PC-9 (cell line): ENCODE measurements at regions of chr12 and their contacts with region 1.

Region 1: DNA sequence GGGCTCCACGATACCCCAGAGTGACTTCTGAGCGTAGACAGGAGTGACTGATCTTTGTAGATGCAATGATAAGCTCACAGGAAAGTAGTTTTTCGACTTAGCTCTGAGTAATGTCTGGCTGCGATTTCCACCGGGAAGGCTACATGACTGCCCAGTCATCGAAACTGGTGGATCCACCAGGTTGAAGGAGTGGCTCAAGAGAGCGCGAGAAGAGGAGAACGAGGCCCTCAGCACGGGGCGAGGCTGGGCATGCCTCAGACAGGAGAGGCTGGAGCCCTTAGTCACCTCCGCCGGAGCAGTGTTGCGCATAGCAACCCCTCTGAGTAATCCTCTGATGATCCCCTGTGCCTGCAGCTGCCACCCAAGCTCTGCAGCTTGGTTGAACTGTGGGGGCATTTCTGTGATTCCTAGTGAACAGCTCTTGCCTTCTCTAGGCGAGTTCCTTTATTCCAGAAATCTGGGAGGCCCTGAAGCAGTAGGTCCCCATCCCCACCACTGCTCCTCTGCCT is 25.6 kb downstream of the ELK3 start:
- DNase-seq: peak; percentile 96 to 99
- H3K4me3 ChIP-seq: peak overlapping the region; percentile 56
- H3K27ac ChIP-seq: peak overlapping the region; percentile 100
- H3K4me1 ChIP-seq: peaks cover 53% of the 10 kb centered on the region
- H3K27me3 ChIP-seq: no peaks in the 10 kb centered on the region
- CTCF ChIP-seq: no peak

Region 2: GRCh38 chr12:95386056-95386455 is 833.7 kb before region 1 on chr12:
- CTCF ChIA-PET with region 1: no interaction called
- POLR2A ChIA-PET with region 1: interaction called, 30 read pairs
- intact Hi-C with region 1: no loop called
- DNase-seq: no peak
- H3K4me3 ChIP-seq: no peak overlapping the region
- H3K27ac ChIP-seq: no peak overlapping the region
- H3K4me1 ChIP-seq: peaks cover 6% of the 10 kb centered on the region; the same call in 1 of the 2 replicates
- H3K27me3 ChIP-seq: no peaks in the 10 kb centered on the region
- CTCF ChIP-seq: no peak

Region 3: DNA sequence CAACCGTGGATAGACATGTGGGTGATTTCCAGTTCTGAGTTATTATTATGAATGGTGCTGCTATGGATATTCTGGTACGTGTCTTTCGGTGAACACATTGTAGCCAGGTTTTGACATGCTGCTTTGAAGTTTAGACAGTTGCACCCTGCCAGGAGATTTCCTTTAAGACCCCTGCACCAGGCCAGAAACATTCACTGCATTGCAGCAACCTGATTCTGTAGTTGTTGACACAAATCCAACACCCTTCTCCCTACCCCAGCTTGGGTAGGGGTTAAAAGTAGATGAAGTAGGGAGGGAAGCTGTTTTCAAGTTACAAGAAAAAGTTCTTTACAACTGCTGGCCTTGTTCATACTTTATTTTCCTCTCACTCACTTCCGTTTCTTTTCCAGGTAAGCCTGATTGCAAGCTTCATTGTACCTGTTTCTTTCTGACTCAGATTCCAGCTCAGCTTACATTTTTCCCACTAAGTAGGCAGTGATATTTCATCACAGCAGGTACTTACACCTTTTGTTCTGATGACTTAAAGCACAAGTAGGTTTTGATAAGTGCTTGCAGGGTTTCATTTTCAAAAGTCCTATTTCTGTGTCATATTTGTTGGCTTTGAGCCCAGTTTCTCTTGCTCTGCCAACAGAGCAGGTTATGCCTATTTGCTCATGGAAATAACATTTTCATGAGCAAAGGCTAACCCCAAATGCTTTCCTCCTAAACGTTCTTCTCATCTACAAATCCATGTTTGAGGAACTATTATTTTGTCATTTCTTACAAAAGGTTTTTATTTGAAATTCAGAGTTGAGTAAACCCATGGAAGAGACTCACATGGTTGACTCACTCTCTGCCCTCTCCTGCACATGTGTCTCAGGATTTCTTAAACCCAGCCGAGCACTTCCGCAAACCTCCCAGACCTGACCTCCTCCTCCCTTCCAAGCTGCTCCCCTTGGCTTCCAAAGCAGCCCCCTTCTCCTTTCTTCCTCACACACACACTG is 172.2 kb before region 1 on chr12:
- CTCF ChIA-PET with region 1: interaction called, 9 read pairs
- POLR2A ChIA-PET with region 1: interaction called, 3 read pairs
- intact Hi-C with region 1: loop called (anchors 5 kb)
- DNase-seq: peak; percentile 37 to 100
- H3K4me3 ChIP-seq: peak overlapping the region; percentile 49; the same call in 1 of the 2 replicates
- H3K27ac ChIP-seq: peak overlapping the region; percentile 99
- H3K4me1 ChIP-seq: peaks cover 69% of the 10 kb centered on the region
- H3K27me3 ChIP-seq: no peaks in the 10 kb centered on the region
- CTCF ChIP-seq: no peak

Region 4: GRCh38 chr12:96094201-96094600 is 125.6 kb before region 1 on chr12:
- CTCF ChIA-PET with region 1: no interaction called
- POLR2A ChIA-PET with region 1: no interaction called
- intact Hi-C with region 1: loop called (anchors 1 kb)
- DNase-seq: peak; percentile 82 to 96
- H3K4me3 ChIP-seq: peak overlapping the region; percentile 22; the same call in 1 of the 2 replicates
- H3K27ac ChIP-seq: peak overlapping the region; percentile 97
- H3K4me1 ChIP-seq: peaks cover 46% of the 10 kb centered on the region
- H3K27me3 ChIP-seq: no peaks in the 10 kb centered on the region
- CTCF ChIP-seq: no peak

Region 5: DNA sequence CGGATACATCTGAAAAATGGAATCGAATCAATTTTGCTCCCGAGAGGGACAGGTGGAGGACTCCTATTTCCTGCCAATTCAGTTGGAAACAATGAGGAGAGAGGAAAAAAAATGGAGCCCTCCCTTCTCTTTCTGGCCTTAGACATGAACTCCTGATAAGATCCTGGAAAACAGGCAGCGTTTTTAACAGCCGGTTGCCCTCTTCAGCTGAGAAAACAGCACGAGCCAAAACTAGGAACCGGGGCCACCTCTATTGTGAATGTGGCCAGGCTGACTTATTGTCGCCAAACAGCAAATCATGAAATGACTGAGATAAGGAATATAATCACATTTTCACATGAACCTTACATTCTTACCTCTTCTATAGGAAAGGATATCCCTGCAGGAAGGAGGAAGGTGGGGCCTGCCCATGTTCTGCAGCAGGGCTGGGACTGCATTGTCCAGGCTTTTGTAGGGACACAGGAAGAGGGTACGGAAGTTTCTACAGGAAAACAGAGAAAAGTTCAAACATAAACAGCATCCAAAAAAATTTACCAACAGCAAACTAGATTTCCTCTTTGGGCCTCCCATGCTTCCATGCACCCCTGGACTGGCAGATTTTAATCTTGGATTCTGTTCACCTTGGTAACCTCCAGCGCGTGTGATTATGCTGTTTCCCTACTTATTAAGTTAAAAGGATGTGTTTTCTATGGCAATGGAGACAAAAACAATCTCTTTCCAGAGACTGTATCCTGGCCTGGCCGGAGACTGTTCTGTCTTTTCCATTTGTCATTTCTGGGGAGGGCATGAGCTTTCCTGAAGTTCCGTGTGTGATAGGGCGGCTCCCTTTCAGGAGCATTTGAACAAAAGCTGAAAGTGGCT is 54.6 kb before region 1 on chr12:
- CTCF ChIA-PET with region 1: no interaction called
- POLR2A ChIA-PET with region 1: no interaction called
- intact Hi-C with region 1: no loop called
- DNase-seq: no peak
- H3K4me3 ChIP-seq: no peak overlapping the region
- H3K27ac ChIP-seq: no peak overlapping the region
- H3K4me1 ChIP-seq: no peaks in the 10 kb centered on the region
- H3K27me3 ChIP-seq: no peaks in the 10 kb centered on the region
- CTCF ChIP-seq: no peak

Region 6: GRCh38 chr12:96194971-96195844 is 24.5 kb before region 1 on chr12:
- CTCF ChIA-PET with region 1: interaction called, 4 read pairs
- POLR2A ChIA-PET with region 1: interaction called, 19 read pairs
- intact Hi-C with region 1: loop called (anchors 1 kb)
- DNase-seq: peak; percentile 55 to 83
- H3K4me3 ChIP-seq: peak overlapping the region; percentile 100
- H3K27ac ChIP-seq: peak overlapping the region; percentile 99
- H3K4me1 ChIP-seq: peaks cover 28% of the 10 kb centered on the region
- H3K27me3 ChIP-seq: no peaks in the 10 kb centered on the region
- CTCF ChIP-seq: no peak

Region 7: DNA sequence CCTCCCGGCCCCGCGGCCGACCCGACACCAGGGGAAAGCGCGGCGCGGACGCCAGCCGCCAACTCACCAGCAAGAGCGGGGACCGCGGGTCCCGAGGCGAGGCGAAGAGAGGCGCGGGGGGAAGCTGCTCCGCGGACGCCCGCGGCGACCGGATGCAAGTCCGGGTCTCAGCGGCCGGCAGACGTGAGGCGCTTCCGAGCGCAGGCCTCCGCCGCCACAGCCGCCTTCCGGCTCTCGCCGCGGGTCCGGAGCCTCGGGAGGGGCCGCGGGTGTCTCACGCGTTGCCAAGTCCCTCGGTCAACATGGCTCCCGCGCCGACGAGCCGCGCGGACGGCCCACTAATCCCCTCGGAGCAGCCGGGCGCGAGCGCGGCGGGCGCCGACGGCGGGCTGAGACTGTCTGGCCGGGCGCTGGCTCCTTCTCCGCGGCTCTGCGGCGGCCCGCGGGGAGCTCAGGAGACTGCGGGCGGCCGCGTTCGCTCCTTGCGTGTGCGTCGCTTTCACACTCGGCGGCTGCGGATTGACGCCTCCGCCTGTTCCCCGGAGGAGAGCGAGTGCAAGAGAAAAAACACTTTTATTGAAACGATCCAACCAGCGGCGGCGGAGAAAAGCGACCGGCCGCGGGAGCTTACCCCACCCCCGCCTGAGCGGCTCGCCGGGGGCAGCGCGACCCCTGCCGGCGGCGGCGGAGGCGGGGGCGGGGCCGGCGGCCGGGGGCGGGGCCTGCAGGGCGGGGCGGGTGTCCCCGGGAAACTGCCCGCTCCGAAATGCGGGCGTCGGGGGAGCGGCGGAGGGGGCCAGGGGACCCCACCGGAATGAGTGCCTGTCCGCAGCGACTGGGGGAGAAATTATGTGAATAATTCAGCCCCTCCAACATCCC is 180.4 kb after region 1 on chr12 and contains the start of gene CDK17:
- CTCF ChIA-PET with region 1: interaction called, 11 read pairs
- POLR2A ChIA-PET with region 1: interaction called, 4 read pairs
- intact Hi-C with region 1: loop called (anchors 2 kb)
- DNase-seq: peak; percentile 70 to 81
- H3K4me3 ChIP-seq: peak within 1 kb of the TSS; percentile 67
- H3K27ac ChIP-seq: peak within 1 kb of the TSS; percentile 93
- H3K4me1 ChIP-seq: peaks cover 51% of the 10 kb centered on the region
- H3K27me3 ChIP-seq: no peaks in the 10 kb centered on the region
- CTCF ChIP-seq: no peak
- total RNA-seq, gene CDK17: 22.5 and 29.0 TPM in 2 replicates

Region 8: GRCh38 chr12:96516472-96517430 is 297.0 kb after region 1 on chr12:
- CTCF ChIA-PET with region 1: no interaction called
- POLR2A ChIA-PET with region 1: no interaction called
- intact Hi-C with region 1: loop called (anchors 2 kb)
- DNase-seq: peak; percentile 71 to 73
- H3K4me3 ChIP-seq: no peak overlapping the region
- H3K27ac ChIP-seq: 0 out of 2 replicates have a peak overlapping the region, but pooled peaks have one; percentile 13
- H3K4me1 ChIP-seq: peaks cover 5% of the 10 kb centered on the region; the same call in 1 of the 2 replicates
- H3K27me3 ChIP-seq: no peaks in the 10 kb centered on the region
- CTCF ChIP-seq: peak; percentile 89